ENCODE measurements at regions of chr16 and their contacts with region 1.

Region 1: GRCh38 chr16:970766-971581 is at the start of gene LMF1:
- DNase-seq: peak; percentile 71 to 96
- H3K4me3 ChIP-seq: peak within 1 kb of the TSS; percentile 91 to 99
- H3K27ac ChIP-seq: peak within 1 kb of the TSS; percentile 68 to 74
- H3K4me1 ChIP-seq: peaks cover 11 to 15% of the 10 kb centered on the region in 2 donors
- H3K27me3 ChIP-seq: no peaks in the 10 kb centered on the region
- CTCF ChIP-seq: no peak
- total RNA-seq, gene LMF1: 26.9 TPM

Region 2: DNA sequence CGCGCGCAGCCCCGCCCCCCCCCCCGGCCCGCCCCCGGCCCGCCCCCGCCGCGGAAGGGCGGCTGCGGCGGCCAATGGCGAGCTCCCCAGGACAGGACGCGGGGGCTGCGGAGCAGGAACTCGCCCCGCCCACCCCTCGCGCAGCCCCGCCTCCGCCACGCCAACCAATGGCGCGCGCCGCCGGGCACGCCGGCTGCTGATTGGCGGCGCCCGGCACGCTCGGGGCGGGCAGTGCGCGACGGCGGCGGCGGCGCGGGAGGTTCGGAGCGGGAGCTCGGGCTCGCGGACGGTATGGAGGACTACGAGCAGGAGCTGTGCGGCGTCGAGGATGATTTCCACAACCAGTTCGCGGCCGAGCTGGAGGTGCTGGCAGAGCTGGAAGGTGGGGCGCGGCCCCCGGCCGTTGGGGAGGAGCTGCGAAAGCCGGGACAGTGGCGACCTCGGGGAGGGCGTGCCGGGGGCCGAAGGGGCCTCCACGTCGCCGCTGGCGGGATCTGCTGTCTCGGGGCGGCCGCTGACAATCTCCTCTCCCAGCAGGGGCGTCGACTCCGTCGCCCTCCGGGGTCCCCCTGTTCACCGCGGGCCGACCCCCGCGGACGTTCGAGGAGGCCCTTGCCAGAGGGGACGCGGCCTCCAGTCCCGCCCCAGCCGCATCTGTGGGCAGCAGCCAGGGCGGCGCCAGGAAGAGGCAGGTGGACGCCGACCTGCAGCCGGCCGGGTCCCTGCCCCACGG is 182.4 kb before region 1 on chr16 and contains the start of gene CHTF18:
- intact Hi-C with region 1: loop called (anchors 2 kb)
- DNase-seq: peak; percentile 63 to 95
- H3K4me3 ChIP-seq: peak within 1 kb of the TSS; percentile 92 to 99
- H3K27ac ChIP-seq: peak within 1 kb of the TSS; percentile 21 to 49
- H3K4me1 ChIP-seq: peaks cover 7 to 17% of the 10 kb centered on the region in 2 donors
- H3K27me3 ChIP-seq: no peaks in the 10 kb centered on the region
- CTCF ChIP-seq: no peak
- total RNA-seq, gene CHTF18: 19.9 TPM

Region 3: GRCh38 chr16:807347-808084 is 163.5 kb before region 1 on chr16:
- intact Hi-C with region 1: loop called (anchors 1 kb)
- DNase-seq: peak; percentile 75 to 95
- H3K4me3 ChIP-seq: peak overlapping the region; percentile 66 to 99
- H3K27ac ChIP-seq: peak overlapping the region; percentile 87 to 90
- H3K4me1 ChIP-seq: peaks cover 12 to 14% of the 10 kb centered on the region in 2 donors
- H3K27me3 ChIP-seq: no peaks in the 10 kb centered on the region
- CTCF ChIP-seq: no peak

Region 4: DNA sequence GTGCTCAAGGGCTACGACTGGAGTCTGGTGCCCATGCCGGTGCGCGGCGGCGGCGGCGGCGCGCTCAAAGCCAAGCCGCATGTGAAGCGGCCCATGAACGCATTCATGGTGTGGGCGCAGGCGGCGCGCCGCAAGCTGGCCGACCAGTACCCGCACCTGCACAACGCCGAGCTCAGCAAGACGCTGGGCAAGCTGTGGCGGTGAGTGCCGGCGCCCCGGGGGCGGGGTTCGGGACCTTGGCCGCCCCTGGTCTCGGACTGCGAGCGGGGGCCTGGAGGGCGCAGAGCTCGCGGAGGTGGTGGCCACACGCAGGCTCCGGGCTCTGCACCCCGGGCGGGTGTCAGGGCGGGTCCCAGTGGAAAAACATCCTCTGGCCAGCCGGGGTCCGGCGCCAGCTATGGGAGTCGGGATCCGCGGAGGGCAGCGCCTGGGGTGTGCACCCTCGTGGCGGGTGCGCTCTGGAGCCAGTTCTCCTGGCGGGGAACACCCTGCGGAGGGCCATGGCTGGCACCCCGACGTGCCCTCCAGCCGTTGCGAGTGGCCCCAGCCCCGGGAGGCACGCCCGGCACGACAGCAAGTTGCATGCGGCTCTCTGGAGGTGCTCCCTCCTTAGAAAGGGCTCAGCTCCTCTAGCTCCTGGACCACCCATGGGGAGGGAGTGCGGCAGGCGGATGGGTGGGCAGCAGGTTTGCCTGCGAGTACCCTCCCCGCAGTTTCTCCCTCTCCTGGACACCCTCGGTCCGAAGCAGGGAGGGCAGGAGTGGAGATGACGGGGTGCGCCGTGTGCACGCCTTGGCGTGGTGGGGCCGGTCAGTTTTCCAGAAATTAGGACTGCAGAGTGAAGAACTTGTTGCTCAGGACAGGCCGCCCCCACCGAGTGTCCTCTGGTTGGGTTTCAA is 11.4 kb after region 1 on chr16:
- intact Hi-C with region 1: no loop called
- DNase-seq: no peak
- H3K4me3 ChIP-seq: peak overlapping the region; percentile 59 to 72
- H3K27ac ChIP-seq: no peak overlapping the region
- H3K4me1 ChIP-seq: peaks cover 21 to 23% of the 10 kb centered on the region in 2 donors
- H3K27me3 ChIP-seq: peaks cover 6% of the 10 kb centered on the region
- CTCF ChIP-seq: no peak

Region 5: GRCh38 chr16:1019231-1020090 is 48.5 kb after region 1 on chr16:
- intact Hi-C with region 1: loop called (anchors 2 kb)
- DNase-seq: peak in 1 of 2 donors; percentile 78
- H3K4me3 ChIP-seq: peak overlapping the region in 1 of 2 donors; percentile 45
- H3K27ac ChIP-seq: peak overlapping the region; percentile 61 to 67
- H3K4me1 ChIP-seq: peaks cover 0 to 10% of the 10 kb centered on the region in 2 donors
- H3K27me3 ChIP-seq: no peaks in the 10 kb centered on the region
- CTCF ChIP-seq: no peak

Region 6: GRCh38 chr16:1093284-1094123 is 122.5 kb after region 1 on chr16:
- intact Hi-C with region 1: loop called (anchors 2 kb)
- DNase-seq: no peak
- H3K4me3 ChIP-seq: no peak overlapping the region
- H3K27ac ChIP-seq: peak overlapping the region; percentile 90 to 95
- H3K4me1 ChIP-seq: peaks cover 40 to 59% of the 10 kb centered on the region in 2 donors
- H3K27me3 ChIP-seq: no peaks in the 10 kb centered on the region
- CTCF ChIP-seq: no peak

Region 7: GRCh38 chr16:1182316-1182671 is 211.3 kb after region 1 on chr16:
- intact Hi-C with region 1: loop called (anchors 5 kb)
- DNase-seq: peak; percentile 70 to 92
- H3K4me3 ChIP-seq: peak overlapping the region; percentile 6 to 35
- H3K27ac ChIP-seq: peak overlapping the region; percentile 83 to 91
- H3K4me1 ChIP-seq: peaks cover 19 to 32% of the 10 kb centered on the region in 2 donors
- H3K27me3 ChIP-seq: no peaks in the 10 kb centered on the region
- CTCF ChIP-seq: no peak